ENCODE measurements at regions of chr11 and their contacts with region 1.

Region 1: DNA sequence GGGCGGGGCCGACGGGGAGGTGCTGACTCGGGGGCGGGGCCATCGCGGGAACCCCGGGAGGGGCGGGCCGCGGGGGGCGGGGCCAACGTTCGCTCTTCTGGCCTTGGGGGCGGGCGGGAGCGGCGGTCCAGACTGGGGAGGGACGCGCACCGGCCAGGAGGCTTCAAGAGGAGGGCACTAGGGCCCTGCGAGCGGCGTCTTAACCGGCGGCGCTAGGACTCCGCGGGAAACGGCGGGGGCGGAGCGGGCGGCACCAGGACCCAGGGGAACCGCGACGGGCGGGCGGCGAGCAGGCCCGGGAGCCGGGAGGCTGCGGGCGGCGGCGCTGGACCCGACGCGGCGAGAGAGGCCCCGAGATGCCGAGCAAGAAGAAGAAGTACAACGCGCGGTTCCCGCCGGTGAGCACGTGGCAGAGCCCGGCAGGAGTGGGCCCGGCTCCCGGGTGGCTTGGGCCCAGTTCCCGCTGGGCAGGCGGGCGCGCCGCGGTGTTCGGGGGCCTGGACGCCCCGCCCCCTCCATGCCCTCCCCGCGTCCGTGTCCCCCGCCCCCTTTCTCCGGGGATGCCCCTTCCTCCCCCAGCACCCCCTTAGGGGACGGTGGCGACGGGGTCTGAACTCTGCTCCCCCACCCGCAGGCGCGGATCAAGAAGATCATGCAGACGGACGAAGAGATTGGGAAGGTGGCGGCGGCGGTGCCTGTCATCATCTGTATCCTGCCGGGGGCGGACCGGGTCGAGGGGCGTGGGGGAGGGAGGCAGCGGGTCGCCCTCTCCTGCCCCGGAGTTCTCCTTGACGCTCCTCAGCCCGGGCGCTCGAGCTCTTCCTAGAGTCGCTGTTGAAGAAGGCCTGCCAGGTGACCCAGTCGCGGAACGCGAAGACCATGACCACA is at the start of gene DRAP1:
- DNase-seq: peak; percentile 98 to 99
- H3K4me3 ChIP-seq: peak within 1 kb of the TSS; percentile 89 to 92
- H3K27ac ChIP-seq: peak within 1 kb of the TSS; percentile 94 to 96
- H3K4me1 ChIP-seq: peaks cover 14 to 54% (median 52%) of the 10 kb centered on the region in 4 donors
- H3K27me3 ChIP-seq: no peaks in the 10 kb centered on the region
- CTCF ChIP-seq: no peak

Region 2: DNA sequence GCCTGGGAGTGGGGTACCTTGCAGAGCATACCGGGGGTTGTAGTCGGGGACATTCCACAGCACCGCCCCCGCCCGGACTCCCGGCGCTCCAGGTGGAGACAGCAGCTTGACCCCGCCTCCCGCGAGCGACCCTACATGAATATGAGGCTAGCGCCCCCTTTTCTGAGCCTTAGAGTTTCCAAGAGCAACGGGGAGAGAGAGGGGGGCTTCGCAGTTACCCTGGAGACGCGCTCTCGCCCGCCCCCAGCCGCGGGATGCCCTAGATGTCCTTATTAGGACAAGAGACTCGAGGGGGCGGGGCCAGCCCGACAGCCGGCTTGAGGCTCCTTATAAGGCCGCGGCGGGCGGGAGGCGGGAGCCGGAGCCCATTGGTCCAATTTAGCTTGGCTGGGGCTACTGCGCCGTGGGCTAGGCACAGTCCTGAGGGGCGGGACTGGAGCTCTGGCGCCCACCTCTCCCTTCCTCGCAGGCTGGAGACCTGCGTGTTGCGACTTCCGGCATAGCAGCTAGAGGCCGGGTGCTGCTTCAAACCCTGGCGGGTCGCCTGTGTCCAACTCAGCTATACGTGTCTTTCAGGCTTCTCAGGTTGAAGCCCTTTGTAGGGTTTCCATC is 60.1 kb before region 1 on chr11:
- intact Hi-C with region 1: loop called (anchors 2 kb)
- DNase-seq: peak; percentile 100
- H3K4me3 ChIP-seq: peak overlapping the region; percentile 84 to 99
- H3K27ac ChIP-seq: peak overlapping the region; percentile 97 to 98
- H3K4me1 ChIP-seq: peaks cover 0 to 50% (median 38%) of the 10 kb centered on the region in 4 donors
- H3K27me3 ChIP-seq: no peaks in the 10 kb centered on the region
- CTCF ChIP-seq: peak in 1 of 2 experiments; percentile 14

Region 3: DNA sequence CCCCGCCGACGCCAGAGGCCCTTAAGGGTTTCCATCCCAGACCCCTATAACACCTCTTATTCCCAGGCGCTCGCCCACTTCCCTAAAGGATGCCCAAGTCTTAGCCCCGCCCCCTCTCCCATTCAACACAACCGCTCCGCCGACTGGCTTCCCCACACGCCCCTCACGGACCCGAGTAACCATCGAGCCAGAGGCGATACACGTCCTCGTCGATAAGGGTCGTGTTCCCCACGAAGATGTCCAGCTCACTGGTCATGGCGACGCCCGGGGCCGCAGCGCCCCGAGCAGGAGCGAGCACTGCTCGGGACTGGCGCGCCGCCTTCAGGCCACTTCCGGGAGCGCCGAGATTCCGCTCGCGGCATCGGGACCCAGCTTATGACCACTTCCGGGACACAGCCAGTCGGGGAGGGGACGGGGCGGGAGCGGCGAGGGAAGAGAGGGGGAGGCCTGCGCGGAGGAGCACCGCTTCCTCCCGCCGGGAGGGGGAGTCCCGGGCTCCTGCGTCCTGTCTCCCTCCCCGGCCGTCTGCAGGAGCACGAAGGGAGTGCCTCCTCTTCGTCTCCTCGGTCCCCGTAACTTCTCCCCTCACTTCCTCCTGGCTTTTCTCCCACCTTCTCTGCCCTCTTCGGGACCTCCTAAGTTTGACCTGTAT is 31.1 kb before region 1 on chr11 and contains the start of gene FIBP:
- intact Hi-C with region 1: loop called (anchors 2 kb)
- DNase-seq: peak; percentile 97 to 99
- H3K4me3 ChIP-seq: peak within 1 kb of the TSS; percentile 61 to 83
- H3K27ac ChIP-seq: peak within 1 kb of the TSS; percentile 93 to 95
- H3K4me1 ChIP-seq: peaks cover 6 to 73% (median 53%) of the 10 kb centered on the region in 4 donors
- H3K27me3 ChIP-seq: no peaks in the 10 kb centered on the region
- CTCF ChIP-seq: peak; percentile 87 to 96

Region 4: GRCh38 chr11:65900125-65900898 is 19.1 kb before region 1 on chr11 and contains the start of gene FOSL1:
- intact Hi-C with region 1: no loop called
- DNase-seq: peak; percentile 84 to 95
- H3K4me3 ChIP-seq: peak within 1 kb of the TSS; percentile 63
- H3K27ac ChIP-seq: peak within 1 kb of the TSS; percentile 63 to 76
- H3K4me1 ChIP-seq: peaks cover 0 to 19% (median 15%) of the 10 kb centered on the region in 4 donors
- H3K27me3 ChIP-seq: no peaks in the 10 kb centered on the region
- CTCF ChIP-seq: no peak

Region 5: DNA sequence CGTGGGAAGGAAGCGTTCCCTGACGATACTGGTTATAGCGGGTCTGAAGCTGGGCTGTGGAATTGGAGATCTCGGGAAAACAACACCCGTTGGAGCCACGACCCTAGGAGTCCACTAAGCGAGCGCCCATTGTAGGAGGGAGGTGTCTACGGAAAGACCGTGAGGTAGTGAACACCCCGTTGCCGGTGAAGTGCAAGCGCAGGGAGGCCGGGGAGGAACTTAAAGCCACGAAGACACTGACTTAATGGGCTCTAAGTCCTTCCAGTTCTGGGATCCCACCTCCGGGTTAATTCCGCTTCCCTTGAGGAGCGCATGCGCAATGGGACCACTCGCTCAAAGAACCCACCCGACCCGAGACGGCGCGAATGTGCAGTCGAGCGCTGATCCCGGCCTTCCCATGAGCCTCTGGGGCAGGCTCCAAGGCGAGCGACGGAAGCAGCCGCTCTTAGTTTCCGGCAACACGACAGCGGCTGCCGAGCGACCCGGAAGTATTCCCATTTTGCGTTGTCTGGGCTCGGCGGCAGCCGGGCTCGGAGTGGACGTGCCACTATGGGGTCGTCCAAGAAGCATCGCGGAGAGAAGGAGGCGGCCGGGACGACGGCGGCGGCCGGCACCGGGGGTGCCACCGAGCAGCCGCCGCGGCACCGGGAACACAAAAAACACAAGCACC is 42.0 kb after region 1 on chr11 and contains the start of gene SART1:
- intact Hi-C with region 1: loop called (anchors 5 kb)
- DNase-seq: peak; percentile 98 to 99
- H3K4me3 ChIP-seq: peak within 1 kb of the TSS; percentile 97 to 98
- H3K27ac ChIP-seq: peak within 1 kb of the TSS; percentile 88 to 95
- H3K4me1 ChIP-seq: peaks cover 6 to 33% (median 28%) of the 10 kb centered on the region in 4 donors
- H3K27me3 ChIP-seq: peaks cover 0 to 15% of the 10 kb centered on the region in 2 donors
- CTCF ChIP-seq: no peak

Region 6: DNA sequence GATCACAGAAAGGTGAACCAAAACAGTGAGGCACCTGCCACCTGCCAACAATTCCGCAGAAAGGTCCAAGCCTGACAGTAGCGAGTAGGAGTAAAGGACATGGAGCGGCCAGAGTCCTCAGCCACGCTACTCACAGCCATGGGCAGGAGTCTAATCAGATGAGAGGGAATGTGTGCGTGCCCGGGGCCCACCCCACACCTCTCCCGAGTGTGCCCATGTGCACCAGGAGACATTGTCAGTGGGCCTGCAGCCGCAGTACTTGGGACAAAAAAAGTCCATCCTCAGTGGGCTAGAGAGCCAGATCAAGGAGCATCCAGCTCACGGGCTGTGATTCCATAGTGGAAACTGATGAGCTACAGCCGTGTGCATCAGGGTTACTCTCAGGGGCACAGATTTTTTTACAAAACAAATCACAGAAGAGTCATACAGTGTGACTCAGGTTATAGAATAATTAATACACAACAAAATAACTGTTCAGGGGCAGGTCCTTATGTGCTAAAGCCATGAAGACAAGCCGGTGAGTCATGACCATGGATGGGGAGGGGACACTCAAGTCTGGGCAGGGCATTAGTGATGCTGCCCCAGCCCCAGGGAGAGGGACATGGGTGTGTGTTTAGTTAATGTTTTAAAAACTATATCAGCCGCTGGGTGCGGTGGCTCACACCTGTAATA is 54.2 kb after region 1 on chr11:
- intact Hi-C with region 1: no loop called
- DNase-seq: no peak
- H3K4me3 ChIP-seq: no peak overlapping the region
- H3K27ac ChIP-seq: no peak overlapping the region
- H3K4me1 ChIP-seq: no peaks in the 10 kb centered on the region
- H3K27me3 ChIP-seq: no peaks in the 10 kb centered on the region
- CTCF ChIP-seq: no peak

Measured in tibial artery (tissue), 4 donors.